ENCODE measurements at regions of chr9 and their contacts with region 1.

Region 1: DNA sequence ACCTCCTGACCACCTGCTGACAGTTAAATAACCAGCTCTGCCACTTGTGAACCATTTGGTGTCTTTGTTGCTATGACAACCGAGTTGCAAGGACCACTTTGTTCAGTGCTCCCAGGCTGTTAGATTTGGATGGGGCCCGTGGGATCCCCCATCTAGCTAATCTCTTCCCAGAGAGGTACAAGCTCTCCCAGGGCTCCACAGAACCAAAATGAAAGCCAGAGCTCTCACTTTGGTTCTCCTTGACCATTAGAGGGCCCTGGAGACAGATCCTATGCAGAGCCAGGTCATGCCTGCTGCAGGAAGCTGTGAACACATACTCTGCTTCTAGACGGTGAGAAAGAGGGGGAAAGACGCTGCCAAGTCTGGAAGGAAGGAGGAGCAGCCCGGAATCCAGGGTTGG is 224.6 kb downstream of the GABBR2 start:
- DNase-seq: no peak
- ATAC-seq: peak; percentile 31

Region 2: GRCh38 chr9:98523231-98523896 is 39.2 kb after region 1 on chr9:
- intact Hi-C with region 1: loop called (anchors 2 kb)
- DNase-seq: no peak
- ATAC-seq: no peak

Measured in Right ventricle myocardium superior (tissue), 1 donor.